ENCODE measurements at regions of chr9 and their contacts with region 1.

Region 1: DNA sequence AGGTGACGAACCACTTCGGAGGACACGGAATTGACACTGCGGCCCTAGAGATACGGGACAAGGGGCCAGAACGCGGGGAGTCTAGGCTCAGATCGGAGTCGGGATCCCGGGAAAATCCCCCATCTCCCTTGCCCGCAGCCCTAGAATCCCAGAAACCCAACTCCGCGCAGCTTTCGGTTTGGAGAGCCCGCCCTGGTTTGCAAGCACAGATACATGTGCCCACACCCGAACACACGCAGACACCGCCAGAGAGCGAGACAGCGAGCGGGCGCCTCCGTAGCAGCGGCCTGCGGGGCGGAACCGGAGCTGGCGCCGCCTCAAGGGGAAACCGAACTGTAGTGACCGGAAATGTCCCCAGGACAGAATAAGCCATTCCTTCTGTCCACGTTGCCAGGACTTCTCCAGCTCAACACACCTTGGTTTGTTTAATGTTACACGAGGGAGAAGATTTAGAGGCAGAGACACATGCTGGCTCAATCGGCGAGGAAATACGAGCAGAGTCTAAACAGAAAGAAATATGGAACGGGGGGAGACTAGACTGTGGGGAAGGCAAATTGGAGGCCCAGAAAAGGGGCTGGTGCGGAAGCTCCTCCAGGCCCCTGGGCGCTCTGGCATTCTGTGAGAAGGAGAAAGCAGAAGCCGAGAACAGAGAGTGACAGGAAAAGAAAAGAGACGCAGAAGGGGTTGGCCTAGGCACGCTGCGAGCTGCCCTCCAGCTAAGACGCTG is 2.9 kb upstream of the PAX5 start:
- DNase-seq: peak; percentile 84
- H3K4me3 Mint-ChIP-seq: peak overlapping the region; percentile 81
- H3K27ac Mint-ChIP-seq: peak overlapping the region; percentile 31
- H3K4me1 Mint-ChIP-seq: peaks cover 26% of the 10 kb centered on the region
- H3K27me3 Mint-ChIP-seq: peaks cover 87% of the 10 kb centered on the region

Region 2: DNA sequence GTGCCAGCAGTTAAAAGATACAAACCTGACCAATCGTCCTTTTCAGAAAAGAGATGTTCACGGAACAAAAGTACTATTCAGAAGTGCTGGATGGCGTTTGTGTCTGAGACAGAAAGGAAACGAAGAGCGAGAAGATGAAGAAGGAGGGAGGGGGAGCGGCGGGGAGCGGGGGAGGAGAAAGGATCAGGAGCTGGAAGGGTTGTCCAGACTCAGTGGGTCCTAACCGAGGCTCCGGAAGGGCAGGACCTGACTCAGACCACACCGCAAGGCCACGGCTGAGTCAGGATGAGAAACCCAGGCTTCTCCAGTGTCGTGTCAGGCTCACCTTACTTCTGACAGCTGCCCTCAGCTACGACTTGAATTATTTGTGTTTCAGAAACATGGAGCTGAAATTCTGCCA is 49.0 kb before region 1 on chr9:
- intact Hi-C with region 1: loop called (anchors 5 kb)
- DNase-seq: no peak
- H3K4me3 Mint-ChIP-seq: peak overlapping the region; percentile 3
- H3K27ac Mint-ChIP-seq: no peak overlapping the region
- H3K4me1 Mint-ChIP-seq: peaks cover 5% of the 10 kb centered on the region
- H3K27me3 Mint-ChIP-seq: peaks cover 61% of the 10 kb centered on the region

Region 3: DNA sequence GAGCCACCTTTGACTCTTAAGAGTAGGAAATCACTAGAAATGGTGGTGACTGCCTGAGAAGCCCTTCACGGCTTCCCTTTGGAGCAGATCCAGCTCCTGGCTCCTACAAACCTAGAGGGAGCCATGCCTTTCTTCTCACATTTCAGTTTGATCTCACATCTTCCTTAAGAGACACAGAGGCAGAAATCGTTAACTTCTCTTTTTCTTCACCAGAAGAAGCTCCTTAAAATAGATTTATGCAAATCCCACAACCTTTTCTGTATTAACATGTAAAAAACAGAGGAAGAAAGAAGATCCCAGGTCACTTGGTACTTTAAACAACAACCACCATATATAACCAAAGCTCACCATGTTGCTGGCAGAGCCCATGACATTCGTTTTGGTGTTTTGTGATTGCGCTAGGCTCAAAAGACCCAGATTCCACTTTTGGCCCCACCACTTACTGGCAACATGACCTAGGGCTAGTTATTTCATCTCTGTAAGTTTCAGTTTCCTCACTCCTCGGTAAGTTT is 32.5 kb before region 1 on chr9:
- intact Hi-C with region 1: no loop called
- DNase-seq: no peak
- H3K4me3 Mint-ChIP-seq: no peak overlapping the region
- H3K27ac Mint-ChIP-seq: no peak overlapping the region
- H3K4me1 Mint-ChIP-seq: no peaks in the 10 kb centered on the region
- H3K27me3 Mint-ChIP-seq: peaks cover 68% of the 10 kb centered on the region

Region 4: DNA sequence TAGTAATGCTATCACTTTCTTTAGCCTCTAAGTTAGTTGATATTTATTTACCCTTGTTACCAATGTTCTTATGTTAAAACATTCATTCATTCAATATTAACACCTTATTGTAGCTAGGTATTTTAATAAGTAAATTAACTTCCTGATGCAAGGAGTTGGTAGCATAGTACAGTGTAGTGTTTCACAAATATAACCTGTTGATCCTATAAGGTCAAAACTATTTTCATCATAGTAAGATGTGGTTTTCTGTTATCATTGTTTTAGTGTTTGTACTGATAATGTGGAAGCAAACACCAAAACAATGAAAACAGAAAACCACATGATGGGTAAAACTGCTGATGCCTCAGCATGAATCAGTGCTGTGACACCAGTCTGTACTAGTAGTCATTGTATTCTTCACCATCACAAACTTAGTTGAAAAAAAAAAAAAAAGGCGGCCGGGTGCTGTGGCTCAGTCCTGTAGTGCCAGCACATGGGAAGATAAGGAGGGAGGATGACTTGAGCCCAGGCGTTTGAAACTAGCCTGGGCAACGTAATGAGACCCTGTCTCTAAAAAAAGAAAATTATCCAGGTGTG is 119.9 kb after region 1 on chr9:
- intact Hi-C with region 1: no loop called
- DNase-seq: no peak
- H3K4me3 Mint-ChIP-seq: no peak overlapping the region
- H3K27ac Mint-ChIP-seq: no peak overlapping the region
- H3K4me1 Mint-ChIP-seq: peaks cover 17% of the 10 kb centered on the region
- H3K27me3 Mint-ChIP-seq: no peaks in the 10 kb centered on the region

Region 5: DNA sequence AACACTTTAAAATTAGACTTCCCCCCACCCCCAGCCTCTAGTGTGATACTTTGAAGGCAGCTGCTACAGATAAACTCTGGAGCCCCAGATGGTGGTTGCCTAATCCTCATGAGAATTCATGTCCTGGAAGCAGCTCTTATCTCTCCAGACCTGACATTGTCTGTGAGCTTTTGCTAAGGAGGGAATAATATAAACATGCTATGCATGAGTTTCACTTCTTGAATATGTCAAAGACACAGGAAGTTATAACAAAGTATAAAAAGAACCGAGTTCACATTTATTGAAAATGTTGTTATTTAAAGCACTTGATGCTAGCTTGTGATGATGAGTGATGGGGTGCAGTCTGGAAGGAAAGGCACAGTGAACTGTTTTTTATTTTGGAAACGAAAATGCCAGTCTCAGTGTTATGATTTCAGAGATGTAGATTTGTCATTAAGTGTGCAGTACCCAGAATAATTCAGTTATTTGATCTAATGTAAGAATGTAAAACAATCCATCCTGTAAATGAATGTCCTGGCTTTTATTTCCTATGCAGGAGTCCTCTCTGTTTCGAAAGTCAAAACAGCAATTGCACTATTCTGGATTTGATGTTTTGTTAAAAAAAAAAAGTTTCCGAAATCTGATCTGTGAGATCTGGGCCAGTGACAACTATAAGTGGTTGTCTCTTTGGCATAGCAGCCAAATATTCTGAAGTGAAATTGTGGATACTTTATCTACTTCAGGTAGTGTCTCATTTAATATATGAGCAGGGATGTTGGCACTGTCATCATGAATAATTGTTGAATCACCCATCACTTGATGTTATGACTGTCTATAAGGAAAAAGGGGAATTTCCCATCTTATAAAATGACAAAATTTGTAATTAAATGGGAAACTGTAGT is 160.5 kb after region 1 on chr9:
- intact Hi-C with region 1: no loop called
- DNase-seq: no peak
- H3K4me3 Mint-ChIP-seq: no peak overlapping the region
- H3K27ac Mint-ChIP-seq: peak overlapping the region; percentile 2
- H3K4me1 Mint-ChIP-seq: peaks cover 40% of the 10 kb centered on the region
- H3K27me3 Mint-ChIP-seq: no peaks in the 10 kb centered on the region

Region 6: DNA sequence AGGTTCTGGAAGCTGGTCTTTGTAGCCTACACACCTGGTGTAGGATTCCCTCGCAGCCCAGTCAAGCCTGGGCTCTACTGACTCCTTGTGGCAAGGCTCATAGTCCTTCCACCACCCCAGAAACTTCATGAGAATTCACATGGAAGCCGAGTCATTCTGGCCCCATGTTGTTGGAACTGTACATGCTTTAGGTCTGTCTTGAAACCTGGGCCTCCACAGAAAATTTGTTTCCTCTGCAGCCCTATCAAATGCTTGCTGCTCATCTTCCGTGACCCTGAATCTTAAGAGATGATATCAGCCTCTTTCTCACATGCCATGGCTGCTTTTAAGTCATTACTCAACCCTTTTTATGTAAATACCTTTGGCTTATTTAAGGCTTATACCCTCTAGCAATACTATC is 272.2 kb after region 1 on chr9:
- intact Hi-C with region 1: loop called (anchors 10 kb)
- DNase-seq: peak; percentile 72
- H3K4me3 Mint-ChIP-seq: no peak overlapping the region
- H3K27ac Mint-ChIP-seq: no peak overlapping the region
- H3K4me1 Mint-ChIP-seq: peaks cover 4% of the 10 kb centered on the region
- H3K27me3 Mint-ChIP-seq: no peaks in the 10 kb centered on the region

Measured in activated CD4-positive, alpha-beta T cell treated with anti-CD3 and anti-CD28 coated beads, Interleukin-2, amount 10 ng/mL, durations not matched to agents 24 days and 14 days (primary cell).